ENCODE measurements at regions of chr11 and their contacts with region 1.

Region 1: GRCh38 chr11:74929431-74930363 is 19.2 kb downstream of the XRRA1 start:
- DNase-seq: no peak
- ATAC-seq: peak; percentile 93
- H3K4me3 ChIP-seq: no peak overlapping the region
- H3K27ac ChIP-seq: no peak overlapping the region
- H3K4me1 ChIP-seq: no peaks in the 10 kb centered on the region
- H3K27me3 ChIP-seq: no peaks in the 10 kb centered on the region
- CTCF ChIP-seq: peak; percentile 90

Region 2: DNA sequence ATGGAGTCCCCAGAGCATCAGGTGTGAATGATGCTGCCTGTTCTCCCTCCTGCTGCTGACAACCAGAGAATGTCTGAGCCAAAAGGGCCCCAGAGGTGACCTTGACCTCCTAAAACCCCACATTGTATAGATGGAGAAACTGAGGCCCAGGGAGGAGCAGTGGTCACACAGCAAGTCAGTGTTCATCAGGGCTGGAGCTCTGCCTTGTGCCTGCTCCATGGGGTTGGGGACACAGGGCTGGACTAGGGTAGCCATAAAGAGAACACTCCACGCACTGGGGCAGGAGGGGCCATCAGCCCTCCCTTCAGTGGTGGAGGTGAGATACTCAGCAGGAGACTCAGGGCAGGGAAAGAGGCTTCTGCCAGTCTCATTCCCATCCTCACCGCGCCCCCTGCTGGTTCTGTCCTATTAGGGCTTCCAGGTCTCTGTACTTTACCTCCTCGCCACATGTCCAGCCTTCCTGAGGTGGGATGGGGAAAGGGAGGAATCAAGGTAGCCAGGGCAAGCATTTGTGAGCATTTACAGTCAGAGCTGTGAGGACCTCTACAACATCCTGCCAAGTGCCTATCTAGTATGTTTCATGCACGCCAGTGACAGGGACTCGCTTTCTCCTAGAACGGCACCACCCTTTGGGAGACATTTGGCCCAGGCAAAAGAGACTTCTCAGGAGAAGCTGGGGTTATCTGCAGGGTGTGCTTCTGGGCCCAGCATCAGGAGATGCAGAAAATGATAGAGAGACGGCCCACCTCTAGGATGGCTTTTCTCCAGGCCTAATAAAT is 102.3 kb after region 1 on chr11:
- intact Hi-C with region 1: loop called (anchors 10 kb)
- DNase-seq: peak; percentile 87
- ATAC-seq: peak; percentile 86
- H3K4me3 ChIP-seq: no peak overlapping the region
- H3K27ac ChIP-seq: no peak overlapping the region
- H3K4me1 ChIP-seq: no peaks in the 10 kb centered on the region
- H3K27me3 ChIP-seq: no peaks in the 10 kb centered on the region
- CTCF ChIP-seq: peak; percentile 71

Region 3: GRCh38 chr11:75248690-75249268 is 319.1 kb after region 1 on chr11:
- intact Hi-C with region 1: loop called (anchors 5 kb)
- DNase-seq: peak; percentile 90
- ATAC-seq: peak; percentile 98
- H3K4me3 ChIP-seq: no peak overlapping the region
- H3K27ac ChIP-seq: no peak overlapping the region
- H3K4me1 ChIP-seq: no peaks in the 10 kb centered on the region
- H3K27me3 ChIP-seq: peaks cover 4% of the 10 kb centered on the region
- CTCF ChIP-seq: peak; percentile 99